HEK293 (cell line): ENCODE measurements at regions of chr1 and their contacts with region 1.

Region 1: GRCh38 chr1:235971571-235972310 is 93.1 kb downstream of the NID1 start:
- H3K4me3 ChIP-seq: no peak overlapping the region
- H3K27ac ChIP-seq: no peak overlapping the region
- H3K4me1 ChIP-seq: no peaks in the 10 kb centered on the region; the same call in 1 of the 2 replicates
- CTCF ChIP-seq: peak; percentile 94

Region 2: DNA sequence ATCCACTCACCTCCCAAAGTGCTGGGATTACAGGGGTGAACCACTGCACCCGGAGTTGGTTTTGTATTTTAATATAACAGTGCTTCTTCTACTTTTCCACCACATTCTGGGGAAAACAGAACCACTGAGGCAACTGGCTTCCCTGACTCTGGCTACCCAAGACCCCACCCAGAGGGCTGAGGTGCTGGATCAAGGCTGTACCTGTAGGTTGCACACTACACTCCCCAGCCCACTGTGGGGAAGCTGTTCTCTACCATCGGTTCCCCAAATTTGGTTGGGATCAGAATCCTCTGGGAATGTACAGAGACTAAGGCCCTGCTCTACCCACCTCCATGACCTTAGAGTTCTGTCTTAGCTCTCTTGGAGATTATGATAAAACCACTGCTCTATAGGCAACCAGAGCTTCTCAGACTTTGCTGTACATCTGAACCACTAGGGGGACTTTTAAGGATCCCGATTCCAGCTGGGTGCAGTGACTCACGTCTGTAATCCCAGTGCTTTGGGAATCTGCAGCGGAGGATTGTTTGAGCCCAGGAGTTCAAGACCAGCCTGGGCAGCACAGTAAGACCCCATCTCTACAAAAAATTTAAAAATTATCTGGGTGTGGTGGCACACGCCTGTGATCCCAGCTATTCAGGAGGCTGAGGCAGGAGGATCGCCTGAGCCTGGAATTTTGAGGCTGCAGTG is 373.7 kb before region 1 on chr1:
- CTCF ChIA-PET with region 1: interaction called, 11 read pairs
- POLR2A ChIA-PET with region 1: no interaction called
- H3K4me3 ChIP-seq: no peak overlapping the region
- H3K27ac ChIP-seq: no peak overlapping the region
- H3K4me1 ChIP-seq: no peaks in the 10 kb centered on the region
- CTCF ChIP-seq: peak; percentile 27; the same call in 1 of the 2 replicates

Region 3: DNA sequence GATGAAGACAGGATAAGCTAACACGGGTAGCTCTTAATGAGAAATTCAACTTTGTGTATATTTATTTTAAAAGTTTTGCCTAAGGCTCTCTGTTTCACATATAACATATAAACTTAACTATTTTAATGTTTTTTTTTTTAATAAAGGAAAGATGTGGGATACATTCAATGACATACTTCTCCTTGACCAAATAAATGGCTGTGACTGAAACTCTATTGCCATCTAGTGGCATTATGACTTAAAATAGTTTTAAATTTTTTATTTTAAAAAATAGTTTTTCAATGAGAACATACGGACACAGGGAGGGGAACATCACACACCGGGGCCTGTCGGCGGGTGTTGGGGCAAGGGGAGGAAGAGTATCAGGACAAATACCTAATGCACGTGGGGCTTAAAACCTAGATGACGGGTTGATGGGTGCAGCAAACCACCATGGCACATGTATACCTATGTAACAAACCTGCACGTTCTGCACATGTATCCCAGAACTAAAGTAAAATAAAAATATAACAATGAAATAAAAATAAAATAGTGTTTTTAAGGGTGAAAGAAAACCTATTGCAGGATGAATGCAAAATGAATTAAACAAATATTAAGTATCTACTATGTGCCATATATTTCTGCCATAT is 188.5 kb before region 1 on chr1:
- CTCF ChIA-PET with region 1: interaction called, 71 read pairs
- POLR2A ChIA-PET with region 1: no interaction called
- H3K4me3 ChIP-seq: no peak overlapping the region
- H3K27ac ChIP-seq: no peak overlapping the region
- H3K4me1 ChIP-seq: no peaks in the 10 kb centered on the region
- CTCF ChIP-seq: peak; percentile 36; the same call in 1 of the 2 replicates

Region 4: GRCh38 chr1:235843461-235843961 is 128.2 kb before region 1 on chr1:
- CTCF ChIA-PET with region 1: interaction called, 22 read pairs
- POLR2A ChIA-PET with region 1: no interaction called
- H3K4me3 ChIP-seq: no peak overlapping the region
- H3K27ac ChIP-seq: no peak overlapping the region
- H3K4me1 ChIP-seq: peaks cover 2% of the 10 kb centered on the region; the same call in 1 of the 2 replicates
- CTCF ChIP-seq: no peak; the same call in 1 of the 2 replicates

Region 5: DNA sequence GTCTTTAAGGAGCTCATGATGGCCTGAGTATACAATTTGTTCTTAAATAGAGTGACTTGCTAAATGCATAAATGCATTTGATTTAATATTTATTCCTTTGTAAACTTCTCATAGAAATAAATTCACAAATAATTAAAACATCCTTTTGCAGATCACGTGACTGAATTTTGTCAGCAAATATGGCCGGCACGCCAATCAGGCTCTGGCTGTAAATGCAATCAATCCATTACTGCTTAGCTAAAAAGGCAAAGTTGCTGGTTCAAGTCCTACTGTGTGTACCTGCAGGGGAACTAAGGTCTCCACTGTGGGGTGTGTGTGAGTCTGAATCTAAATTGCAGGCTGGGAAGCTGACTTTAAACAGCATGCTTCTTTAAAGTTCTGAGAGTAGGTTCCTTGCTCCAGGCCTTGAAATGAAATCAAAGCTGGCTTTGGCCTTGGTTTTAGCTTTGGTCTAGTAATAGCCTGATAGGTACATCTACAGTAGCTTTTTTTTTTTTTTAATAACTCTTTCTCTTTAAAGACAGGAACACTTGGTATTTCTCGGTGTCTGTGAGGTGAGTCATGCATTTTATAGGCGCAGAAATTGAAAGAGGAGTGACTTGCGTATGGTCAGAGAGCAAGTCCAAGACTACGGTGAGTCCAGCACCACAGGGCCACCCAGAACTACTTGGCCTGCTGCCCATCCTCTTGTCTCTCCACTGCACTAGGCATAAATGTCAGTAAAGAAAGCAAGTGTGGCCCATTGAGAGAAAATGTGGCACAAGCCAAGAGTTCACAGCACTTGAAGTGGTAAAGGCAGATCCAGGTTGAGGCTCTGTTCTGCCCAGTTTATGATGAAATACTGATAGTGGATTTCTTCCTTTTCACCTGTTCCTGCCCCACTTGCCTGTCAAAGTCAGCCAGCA is 68.9 kb before region 1 on chr1:
- CTCF ChIA-PET with region 1: interaction called, 10 read pairs
- POLR2A ChIA-PET with region 1: interaction called, 5 read pairs
- H3K4me3 ChIP-seq: no peak overlapping the region
- H3K27ac ChIP-seq: peak overlapping the region; percentile 4; the same call in 1 of the 2 replicates
- H3K4me1 ChIP-seq: peaks cover 3% of the 10 kb centered on the region; the same call in 1 of the 2 replicates
- CTCF ChIP-seq: no peak

Region 6: DNA sequence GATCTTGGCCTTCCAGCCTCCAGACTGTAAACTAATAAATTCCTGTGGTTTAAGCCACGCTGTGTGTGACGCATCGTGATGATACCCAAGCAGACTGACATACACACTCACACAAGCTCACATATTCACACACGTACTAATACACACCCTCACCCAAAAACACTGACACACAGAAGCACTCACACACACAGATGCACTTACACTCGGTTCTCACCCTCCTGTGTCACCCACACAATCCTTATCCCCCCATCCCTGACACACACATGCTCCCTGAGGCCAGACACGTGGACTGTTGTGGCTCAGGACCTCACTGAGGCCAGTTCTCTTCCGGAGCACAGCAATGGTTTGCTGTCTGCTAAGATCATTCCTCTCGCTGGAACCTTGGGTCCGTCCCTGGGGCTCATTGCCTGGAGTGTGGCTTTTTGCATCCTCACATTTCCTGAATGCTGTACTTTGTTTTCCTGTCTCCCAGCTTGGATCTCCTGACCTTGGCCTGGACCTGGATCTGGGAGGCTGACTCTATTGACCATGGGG is 28.1 kb before region 1 on chr1:
- CTCF ChIA-PET with region 1: interaction called, 25 read pairs
- POLR2A ChIA-PET with region 1: no interaction called
- H3K4me3 ChIP-seq: no peak overlapping the region
- H3K27ac ChIP-seq: no peak overlapping the region
- H3K4me1 ChIP-seq: no peaks in the 10 kb centered on the region
- CTCF ChIP-seq: no peak

Region 7: DNA sequence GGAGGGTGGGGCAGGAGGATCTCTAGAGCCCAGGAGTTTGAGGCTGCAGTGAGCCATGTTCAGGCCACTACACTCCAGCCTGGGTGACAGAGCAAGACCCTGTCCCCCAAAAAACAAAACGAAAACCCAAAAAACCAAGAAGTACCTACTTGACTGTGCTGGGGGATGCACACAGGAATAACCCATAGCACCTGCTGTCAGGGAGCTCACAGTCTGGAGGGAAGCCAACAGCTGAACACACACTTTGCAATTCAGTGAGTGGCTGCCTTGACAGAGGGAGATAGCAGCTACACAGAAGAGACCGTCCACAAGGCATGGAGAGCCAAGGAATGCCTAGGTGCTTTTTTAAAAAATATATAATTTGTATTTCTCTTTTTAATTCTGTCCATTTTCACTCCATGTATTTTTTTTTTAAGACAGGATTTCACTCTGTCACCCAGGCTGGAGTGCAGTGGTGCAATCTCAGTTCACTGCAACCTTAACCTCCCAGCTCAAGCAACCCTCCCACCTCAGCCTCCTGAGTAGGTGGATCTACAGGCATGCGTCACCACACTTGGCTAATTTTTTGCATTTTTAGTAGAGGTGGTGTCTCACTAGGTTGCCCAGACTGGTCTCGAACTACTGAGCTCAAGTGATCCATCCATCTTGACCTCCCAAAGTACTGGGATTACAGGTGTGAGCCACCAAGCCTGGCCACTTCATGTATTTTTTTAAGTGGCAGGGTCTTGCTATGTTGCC is 24.5 kb after region 1 on chr1:
- CTCF ChIA-PET with region 1: interaction called, 10 read pairs
- POLR2A ChIA-PET with region 1: no interaction called
- H3K4me3 ChIP-seq: no peak overlapping the region
- H3K27ac ChIP-seq: no peak overlapping the region
- H3K4me1 ChIP-seq: no peaks in the 10 kb centered on the region
- CTCF ChIP-seq: no peak

Region 8: GRCh38 chr1:236108027-236108648 is 136.4 kb after region 1 on chr1:
- CTCF ChIA-PET with region 1: no interaction called
- POLR2A ChIA-PET with region 1: no interaction called
- H3K4me3 ChIP-seq: no peak overlapping the region
- H3K27ac ChIP-seq: no peak overlapping the region
- H3K4me1 ChIP-seq: no peaks in the 10 kb centered on the region
- CTCF ChIP-seq: no peak

Region 9: DNA sequence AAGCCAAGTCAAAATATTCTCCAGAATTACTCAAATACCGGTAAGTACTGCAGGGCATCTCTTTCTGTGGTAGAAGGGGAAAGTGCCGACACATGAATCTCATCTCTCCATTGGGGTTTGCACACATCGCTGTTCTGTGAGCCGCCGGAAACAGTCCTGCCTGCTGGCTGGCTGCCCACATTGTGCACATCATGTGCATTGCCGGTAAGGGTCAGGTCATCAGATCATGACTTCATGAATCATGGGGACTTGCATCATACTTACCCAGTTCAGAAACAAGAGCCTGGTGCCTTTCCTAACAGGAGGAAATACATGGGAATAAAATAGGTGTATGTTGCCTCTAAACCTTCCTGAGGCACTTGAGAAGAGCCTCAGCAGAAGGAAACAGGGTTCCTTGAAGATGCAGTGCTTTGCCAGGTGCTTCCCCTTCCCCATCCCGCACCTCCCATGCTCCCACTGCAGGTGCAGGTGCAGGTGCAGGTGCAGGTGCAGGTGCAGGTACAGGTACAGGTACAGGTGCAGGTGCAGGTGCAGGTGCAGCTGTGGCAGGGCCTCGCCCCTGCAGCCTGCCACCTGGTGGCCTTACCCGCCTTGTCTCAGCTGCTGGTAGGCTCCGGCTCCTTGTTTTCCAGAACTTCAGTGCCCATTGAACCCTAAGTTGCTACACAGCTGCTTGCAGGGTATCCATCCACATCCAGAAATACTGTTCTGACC is 197.1 kb after region 1 on chr1:
- CTCF ChIA-PET with region 1: no interaction called
- POLR2A ChIA-PET with region 1: no interaction called
- H3K4me3 ChIP-seq: no peak overlapping the region
- H3K27ac ChIP-seq: no peak overlapping the region
- H3K4me1 ChIP-seq: no peaks in the 10 kb centered on the region
- CTCF ChIP-seq: no peak